ENCODE measurements at regions of chr6 and their contacts with region 1.

Region 1: DNA sequence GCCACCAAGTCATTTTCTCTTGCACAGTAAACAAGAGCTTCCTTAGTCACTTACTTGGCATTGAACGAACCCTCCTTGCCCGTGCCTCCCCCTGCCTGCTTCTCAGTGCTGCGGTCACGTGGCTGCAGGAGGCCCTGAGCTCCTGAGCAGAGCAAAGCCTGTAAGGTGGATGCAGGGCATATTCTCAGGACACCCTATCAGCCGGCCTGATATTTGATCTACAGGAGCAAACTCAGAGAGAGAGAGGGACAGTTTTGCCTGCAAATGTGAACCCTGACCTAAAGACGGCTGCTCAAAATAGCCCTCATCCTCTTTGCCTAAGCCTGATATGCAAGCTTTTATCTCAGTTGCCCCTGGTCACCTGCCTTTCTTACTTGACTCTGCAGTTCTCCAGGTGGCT is 93.0 kb upstream of the POPDC3 start:
- DNase-seq: peak in 2 of 5 donors; percentile 45 to 47
- ATAC-seq: peak in 3 of 4 donors; percentile 69 to 80 (median 74)
- H3K4me3 ChIP-seq: no peak overlapping the region
- H3K27ac ChIP-seq: peak overlapping the region in 6 of 12 donors; percentile 27 to 62 (median 40)
- H3K4me1 ChIP-seq: peaks cover 0 to 23% (median 10%) of the 10 kb centered on the region in 12 donors
- H3K27me3 ChIP-seq: no peaks in the 10 kb centered on the region
- CTCF ChIP-seq: no peak
- POLR2A ChIP-seq: no peak

Region 2: DNA sequence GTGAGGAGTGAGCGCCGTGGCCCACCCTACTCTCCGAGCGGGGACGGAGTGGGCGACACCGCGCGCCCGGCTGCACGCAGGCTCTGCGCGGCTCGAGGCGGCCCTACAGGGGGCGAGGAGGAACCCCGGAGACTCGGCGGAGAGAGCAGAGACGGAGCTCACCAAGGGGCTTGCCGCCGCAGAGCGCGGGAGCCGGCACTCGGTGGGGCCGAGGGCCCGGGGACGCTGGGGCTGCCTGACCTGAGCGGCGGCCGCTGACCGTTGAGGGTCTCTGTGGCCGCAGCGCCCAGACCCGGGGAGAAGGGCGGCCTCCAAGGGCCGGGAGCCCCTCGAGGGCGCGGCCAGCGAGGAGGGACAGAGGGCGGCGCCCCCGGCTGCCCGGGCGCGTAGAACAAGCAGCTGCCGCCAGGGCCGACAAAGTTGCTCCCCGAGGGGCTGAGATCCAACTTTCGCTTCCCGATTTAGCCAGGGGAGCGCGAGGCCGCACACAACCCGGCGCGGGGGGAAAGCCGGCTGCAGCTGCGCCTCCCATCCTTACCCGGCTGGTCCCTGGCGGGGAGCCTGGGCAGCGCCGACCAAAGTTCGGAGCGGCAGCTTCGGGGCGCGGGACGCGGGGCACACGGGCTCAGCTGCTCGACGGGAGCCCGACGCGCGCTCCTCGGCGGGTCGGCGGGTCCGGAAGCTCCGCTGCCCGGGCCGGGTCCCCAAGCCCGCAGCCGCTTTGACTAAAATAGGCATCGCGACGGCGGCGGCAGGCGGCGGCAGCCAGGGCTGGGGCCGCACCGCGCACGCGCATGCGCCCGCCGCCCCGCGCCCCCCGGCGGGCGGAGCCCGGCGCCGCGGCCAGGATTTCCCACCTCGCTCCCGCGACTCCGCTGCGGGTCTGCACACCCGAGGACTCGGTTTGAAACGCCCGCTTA is 136.1 kb before region 1 on chr6:
- intact Hi-C with region 1: loop called in 2 of 10 experiments (anchors 5 kb)
- DNase-seq: peak; percentile 75 to 88 (median 79)
- ATAC-seq: peak; percentile 52 to 85 (median 82)
- H3K4me3 ChIP-seq: peak overlapping the region; percentile 58 to 93 (median 87)
- H3K27ac ChIP-seq: peak overlapping the region; percentile 62 to 95 (median 91)
- H3K4me1 ChIP-seq: peaks cover 0 to 15% (median 7%) of the 10 kb centered on the region in 12 donors
- H3K27me3 ChIP-seq: peaks cover 0 to 33% (median 0%) of the 10 kb centered on the region in 9 donors
- CTCF ChIP-seq: peak in 8 of 12 donors; percentile 6 to 35 (median 20)
- POLR2A ChIP-seq: peak in 1 of 2 donors; percentile 68

Region 3: GRCh38 chr6:105445481-105445880 is 172.7 kb after region 1 on chr6:
- intact Hi-C with region 1: no loop called
- DNase-seq: no peak
- ATAC-seq: no peak
- H3K4me3 ChIP-seq: no peak overlapping the region
- H3K27ac ChIP-seq: no peak overlapping the region
- H3K4me1 ChIP-seq: no peaks in the 10 kb centered on the region
- H3K27me3 ChIP-seq: no peaks in the 10 kb centered on the region
- CTCF ChIP-seq: no peak
- POLR2A ChIP-seq: no peak

Measured in heart left ventricle (tissue), 16 donors.